IMR-90 (cell line): ENCODE measurements at regions of chr1 and their contacts with region 1.

Region 1: DNA sequence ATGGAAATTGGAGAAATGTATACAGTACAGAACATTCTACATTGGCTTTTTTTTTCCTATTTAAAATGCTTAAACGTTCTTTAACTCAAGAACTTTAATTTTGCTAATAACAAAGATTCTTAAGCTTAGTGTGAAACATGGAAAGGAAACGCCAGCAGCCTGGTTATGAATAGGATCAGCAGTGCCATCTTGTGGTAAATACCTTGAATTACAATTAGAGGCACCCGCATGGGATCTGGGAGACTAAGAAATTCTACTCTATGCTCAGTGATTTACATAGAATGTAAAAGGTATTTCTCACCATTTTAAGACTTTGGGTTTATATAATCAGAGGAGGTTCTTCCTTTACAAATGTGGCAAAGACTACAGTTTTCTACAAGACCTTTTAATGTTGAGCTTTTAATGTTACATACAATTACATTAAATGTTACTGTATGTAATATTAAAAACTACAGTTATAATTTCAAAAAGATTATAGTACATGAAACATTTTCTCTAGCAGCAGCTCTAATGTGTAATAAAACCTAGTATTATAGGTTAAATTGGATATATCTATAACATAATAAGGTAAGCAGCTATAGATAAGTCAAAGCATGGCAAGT is 32.1 kb upstream of the APOBEC4 start:
- DNase-seq: peak; percentile 56
- ATAC-seq: peak; percentile 78; the same call in 1 of the 2 replicates
- H3K4me3 ChIP-seq: no peak overlapping the region
- H3K27ac ChIP-seq: no peak overlapping the region
- H3K4me1 ChIP-seq: no peaks in the 10 kb centered on the region
- H3K27me3 ChIP-seq: no peaks in the 10 kb centered on the region
- CTCF ChIP-seq: peak; percentile 70
- POLR2A ChIP-seq: no peak
- RAD21 ChIP-seq: peak; percentile 72

Region 2: GRCh38 chr1:183655562-183656075 is 29.6 kb before region 1 on chr1:
- CTCF ChIA-PET with region 1: interaction called, 13 read pairs
- POLR2A ChIA-PET with region 1: no interaction called
- dilution Hi-C with region 1: no loop called
- in situ Hi-C with region 1: no loop called
- intact Hi-C with region 1: loop called (anchors 1 kb)
- DNase-seq: peak; percentile 84
- ATAC-seq: peak; percentile 96
- H3K4me3 ChIP-seq: no peak overlapping the region
- H3K27ac ChIP-seq: no peak overlapping the region
- H3K4me1 ChIP-seq: peaks cover 6% of the 10 kb centered on the region
- H3K27me3 ChIP-seq: no peaks in the 10 kb centered on the region
- CTCF ChIP-seq: peak; percentile 92
- POLR2A ChIP-seq: 0 out of 2 replicates have a peak, but pooled peaks have one; percentile 32
- RAD21 ChIP-seq: peak; percentile 92

Region 3: GRCh38 chr1:184770181-184770979 is 1085.2 kb after region 1 on chr1:
- CTCF ChIA-PET with region 1: no interaction called
- POLR2A ChIA-PET with region 1: interaction called, 13 read pairs
- dilution Hi-C with region 1: no loop called
- in situ Hi-C with region 1: no loop called
- intact Hi-C with region 1: no loop called
- DNase-seq: no peak
- ATAC-seq: no peak
- H3K4me3 ChIP-seq: no peak overlapping the region
- H3K27ac ChIP-seq: no peak overlapping the region
- H3K4me1 ChIP-seq: no peaks in the 10 kb centered on the region
- H3K27me3 ChIP-seq: no peaks in the 10 kb centered on the region
- CTCF ChIP-seq: no peak
- POLR2A ChIP-seq: no peak
- RAD21 ChIP-seq: no peak